ENCODE measurements at regions of chr10 and their contacts with region 1.

Region 1: GRCh38 chr10:71569775-71570588 is 149.6 kb downstream of the C10orf105 start:
- DNase-seq: no peak
- ATAC-seq: peak; percentile 86
- H3K4me3 ChIP-seq: no peak overlapping the region
- H3K27ac ChIP-seq: no peak overlapping the region
- H3K4me1 ChIP-seq: no peaks in the 10 kb centered on the region
- H3K27me3 ChIP-seq: peaks cover 0 to 7% of the 10 kb centered on the region in 2 experiments; a peak in 2 of 4 replicates
- CTCF ChIP-seq: peak; percentile 76 to 84 (median 79)
- EP300 ChIP-seq: no peak
- POLR2A ChIP-seq: no peak
- RAD21 ChIP-seq: peak; percentile 73

Region 2: DNA sequence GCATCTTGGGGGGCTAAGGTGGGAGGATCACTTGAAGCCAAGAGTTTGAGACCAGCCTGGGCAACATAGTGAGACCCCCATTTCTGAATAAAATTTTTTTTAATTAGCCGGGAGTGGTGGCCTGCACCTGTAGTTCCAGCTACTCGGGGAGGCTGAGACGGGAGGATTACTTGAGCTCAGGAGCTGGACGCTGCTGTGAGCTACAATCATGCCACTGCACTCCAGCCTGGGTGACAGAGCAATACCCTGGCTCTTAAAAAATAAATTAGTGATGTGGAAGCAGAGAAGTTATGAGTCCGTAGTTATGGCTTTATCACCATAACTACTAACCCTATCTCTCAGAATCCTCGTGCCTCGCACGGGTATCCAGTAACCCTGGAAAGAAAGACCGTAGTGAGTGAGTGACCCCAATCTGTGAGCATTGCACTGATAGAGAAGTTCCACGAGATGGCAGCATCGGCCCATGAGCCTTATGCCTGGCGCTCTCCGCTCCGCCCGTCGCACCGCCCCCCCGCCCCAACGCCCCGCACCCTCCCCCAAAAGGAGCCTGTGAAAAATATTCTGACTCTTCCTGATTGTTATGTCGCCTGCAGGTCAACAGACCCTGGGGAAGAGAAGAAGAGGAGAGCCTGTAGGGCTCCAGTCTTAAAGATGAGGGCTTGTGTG is 255.8 kb before region 1 on chr10:
- CTCF ChIA-PET with region 1: interaction called, 148 read pairs
- POLR2A ChIA-PET with region 1: no interaction called
- RAD21 ChIA-PET with region 1: interaction called, 35 read pairs
- SMC1A ChIA-PET with region 1: interaction called, 15 read pairs
- in situ Hi-C with region 1: loop called (anchors 5 kb)
- intact Hi-C with region 1: loop called (anchors 1 kb)
- DNase-seq: no peak
- ATAC-seq: peak; percentile 55
- H3K4me3 ChIP-seq: no peak overlapping the region
- H3K27ac ChIP-seq: no peak overlapping the region
- H3K4me1 ChIP-seq: peaks cover 12% of the 10 kb centered on the region
- H3K27me3 ChIP-seq: no peaks in the 10 kb centered on the region
- CTCF ChIP-seq: peak; percentile 62 to 91 (median 76)
- EP300 ChIP-seq: no peak
- POLR2A ChIP-seq: no peak
- RAD21 ChIP-seq: peak; percentile 74

Region 3: DNA sequence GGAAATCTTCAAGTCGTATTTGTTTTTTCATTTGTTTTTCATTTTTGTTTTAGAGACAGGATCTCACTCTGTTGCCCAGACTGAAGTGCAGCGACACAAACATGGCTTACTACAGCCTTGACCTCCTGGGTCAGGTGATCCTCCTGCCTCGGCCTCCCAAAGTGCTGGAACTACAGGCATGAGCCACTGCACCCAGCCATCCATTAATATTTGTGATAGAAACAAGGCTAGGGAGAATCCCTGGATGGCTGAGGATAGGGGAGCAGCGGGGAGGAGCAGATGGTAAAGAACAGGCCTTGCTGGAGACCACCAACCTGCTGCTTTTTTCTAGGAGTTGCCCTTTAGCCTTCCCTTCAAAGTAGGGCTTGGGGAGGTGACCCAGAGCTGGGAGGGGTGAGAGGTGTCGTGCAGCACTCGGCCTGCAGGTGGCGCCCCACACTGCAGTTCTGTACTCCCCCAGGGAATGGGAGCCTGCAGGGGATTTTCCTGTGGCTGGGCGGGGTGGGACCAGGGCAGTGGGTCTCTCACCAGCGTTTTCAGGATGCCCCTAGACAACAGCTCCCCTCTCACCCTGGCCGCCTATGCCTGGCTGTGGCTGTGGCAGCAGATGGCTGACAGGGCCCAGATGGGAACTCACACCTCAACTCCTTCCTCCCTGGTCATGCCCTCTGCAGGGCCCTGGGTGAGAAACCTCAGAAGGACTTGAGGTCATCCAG is 185.9 kb before region 1 on chr10:
- CTCF ChIA-PET with region 1: interaction called, 77 read pairs
- POLR2A ChIA-PET with region 1: no interaction called
- RAD21 ChIA-PET with region 1: interaction called, 21 read pairs
- SMC1A ChIA-PET with region 1: interaction called, 12 read pairs
- in situ Hi-C with region 1: no loop called
- intact Hi-C with region 1: loop called (anchors 1 kb)
- DNase-seq: no peak
- ATAC-seq: peak; percentile 98
- H3K4me3 ChIP-seq: no peak overlapping the region
- H3K27ac ChIP-seq: no peak overlapping the region
- H3K4me1 ChIP-seq: no peaks in the 10 kb centered on the region
- H3K27me3 ChIP-seq: peaks cover 0 to 3% of the 10 kb centered on the region in 2 experiments; a peak in 1 of 4 replicates
- CTCF ChIP-seq: peak; percentile 95 to 97 (median 95)
- EP300 ChIP-seq: no peak
- POLR2A ChIP-seq: no peak
- RAD21 ChIP-seq: peak; percentile 86

Region 4: DNA sequence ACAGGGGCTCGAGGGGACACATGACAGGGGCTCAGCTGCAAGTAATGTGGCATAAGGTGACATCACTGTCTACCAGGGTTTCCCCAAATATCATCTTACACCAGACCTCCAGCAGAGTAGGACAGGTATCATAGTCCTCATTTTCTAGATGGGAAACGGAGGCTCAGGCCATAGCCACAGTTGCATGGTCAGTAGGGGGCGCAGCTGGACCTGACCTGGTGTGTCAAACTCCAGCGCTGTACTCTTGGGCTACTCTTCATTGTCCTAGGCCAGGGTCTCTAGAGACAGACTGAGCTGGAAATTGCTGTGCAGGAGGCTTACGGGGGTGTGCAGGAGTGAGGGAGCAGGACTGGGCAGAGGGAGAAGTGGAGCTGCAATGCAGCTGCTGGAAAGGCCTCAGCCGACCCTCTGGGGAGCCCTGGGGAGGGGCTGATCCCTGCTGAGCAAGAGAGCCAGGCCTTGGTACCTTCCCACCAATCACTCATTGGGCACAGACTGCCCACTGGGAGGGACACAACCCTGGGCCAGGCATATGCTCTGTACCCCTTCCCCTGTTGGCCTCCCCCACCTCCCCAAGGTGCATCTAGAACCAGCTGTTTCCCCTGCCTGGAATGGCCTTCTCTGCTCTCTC is 83.4 kb before region 1 on chr10:
- CTCF ChIA-PET with region 1: interaction called, 66 read pairs
- POLR2A ChIA-PET with region 1: no interaction called
- RAD21 ChIA-PET with region 1: interaction called, 13 read pairs
- SMC1A ChIA-PET with region 1: interaction called, 29 read pairs
- in situ Hi-C with region 1: no loop called
- intact Hi-C with region 1: loop called (anchors 1 kb)
- DNase-seq: no peak
- ATAC-seq: peak; percentile 89
- H3K4me3 ChIP-seq: no peak overlapping the region
- H3K27ac ChIP-seq: no peak overlapping the region
- H3K4me1 ChIP-seq: no peaks in the 10 kb centered on the region
- H3K27me3 ChIP-seq: peaks cover 0 to 2% of the 10 kb centered on the region in 2 experiments; a peak in 1 of 4 replicates
- CTCF ChIP-seq: peak; percentile 65 to 71 (median 71)
- EP300 ChIP-seq: no peak
- POLR2A ChIP-seq: no peak
- RAD21 ChIP-seq: peak; percentile 65

Region 5: DNA sequence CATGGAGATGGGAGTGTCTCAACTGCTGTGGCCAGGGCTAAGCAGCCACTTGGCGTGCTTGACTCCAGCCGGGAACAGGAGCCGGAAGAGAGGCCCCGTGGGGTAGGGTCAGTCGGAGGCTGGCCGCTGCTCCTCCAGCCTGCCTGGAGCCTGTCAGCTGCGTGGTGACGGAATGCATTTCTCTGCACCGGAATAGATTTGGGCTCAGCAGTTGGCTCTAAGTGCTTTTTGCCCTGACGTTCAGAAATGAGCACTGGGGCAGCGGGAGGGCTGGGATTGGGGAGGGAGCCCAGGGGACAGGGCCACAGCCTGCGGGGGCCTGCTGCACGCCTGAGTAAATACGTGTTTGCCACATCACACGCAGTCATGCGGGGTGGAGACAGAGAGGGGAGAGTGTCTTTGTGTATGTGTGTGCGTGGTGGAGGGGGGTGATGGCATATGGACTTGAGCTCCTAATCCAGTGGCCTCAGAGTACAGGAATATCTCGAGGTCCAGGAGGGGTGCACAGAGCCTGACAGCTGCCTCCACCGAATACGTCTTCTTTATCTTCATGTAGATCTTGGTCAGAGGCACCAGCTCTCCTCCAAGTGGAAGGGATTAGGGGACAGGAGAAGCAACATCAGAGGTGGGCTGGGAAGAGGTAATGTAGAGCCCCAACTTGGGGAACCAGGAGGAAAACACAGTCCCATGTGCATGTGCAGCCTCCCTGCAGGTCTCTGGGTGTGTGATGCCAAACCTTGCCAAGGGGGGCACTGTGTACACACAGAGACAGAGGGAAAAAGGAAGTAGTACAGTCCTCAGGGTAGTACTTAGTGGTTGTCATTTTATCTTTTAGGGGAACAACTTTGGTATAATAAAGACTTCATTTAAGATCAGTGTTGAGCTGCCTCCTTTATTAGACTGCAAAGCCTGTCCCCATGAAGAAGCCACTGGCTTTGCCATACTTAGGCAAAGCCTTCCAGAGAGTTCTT is 21.8 kb before region 1 on chr10:
- CTCF ChIA-PET with region 1: interaction called, 12 read pairs
- POLR2A ChIA-PET with region 1: no interaction called
- RAD21 ChIA-PET with region 1: no interaction called
- SMC1A ChIA-PET with region 1: interaction called, 3 read pairs
- in situ Hi-C with region 1: no loop called
- intact Hi-C with region 1: no loop called
- DNase-seq: no peak
- ATAC-seq: peak; percentile 95
- H3K4me3 ChIP-seq: no peak overlapping the region
- H3K27ac ChIP-seq: no peak overlapping the region
- H3K4me1 ChIP-seq: no peaks in the 10 kb centered on the region
- H3K27me3 ChIP-seq: peaks cover 1 to 3% of the 10 kb centered on the region in 2 experiments; a peak in 3 of 4 replicates
- CTCF ChIP-seq: peak; percentile 25 to 59 (median 37); a peak in 4 of 6 replicates
- EP300 ChIP-seq: no peak
- POLR2A ChIP-seq: no peak
- RAD21 ChIP-seq: 0 out of 2 replicates have a peak, but pooled peaks have one; percentile 23

Region 6: GRCh38 chr10:71608819-71609768 is 39.1 kb after region 1 on chr10:
- CTCF ChIA-PET with region 1: interaction called, 10 read pairs
- POLR2A ChIA-PET with region 1: no interaction called
- RAD21 ChIA-PET with region 1: interaction called, 3 read pairs
- SMC1A ChIA-PET with region 1: no interaction called
- in situ Hi-C with region 1: no loop called
- intact Hi-C with region 1: no loop called
- DNase-seq: no peak
- ATAC-seq: peak; percentile 82
- H3K4me3 ChIP-seq: no peak overlapping the region
- H3K27ac ChIP-seq: no peak overlapping the region
- H3K4me1 ChIP-seq: no peaks in the 10 kb centered on the region
- H3K27me3 ChIP-seq: no peaks in the 10 kb centered on the region; a peak in 2 of 4 replicates
- CTCF ChIP-seq: peak; percentile 75 to 84 (median 80)
- EP300 ChIP-seq: no peak
- POLR2A ChIP-seq: no peak
- RAD21 ChIP-seq: peak; percentile 64

Measured in GM12878 (cell line).